ENCODE measurements at regions of chr17 and their contacts with region 1.

Region 1: DNA sequence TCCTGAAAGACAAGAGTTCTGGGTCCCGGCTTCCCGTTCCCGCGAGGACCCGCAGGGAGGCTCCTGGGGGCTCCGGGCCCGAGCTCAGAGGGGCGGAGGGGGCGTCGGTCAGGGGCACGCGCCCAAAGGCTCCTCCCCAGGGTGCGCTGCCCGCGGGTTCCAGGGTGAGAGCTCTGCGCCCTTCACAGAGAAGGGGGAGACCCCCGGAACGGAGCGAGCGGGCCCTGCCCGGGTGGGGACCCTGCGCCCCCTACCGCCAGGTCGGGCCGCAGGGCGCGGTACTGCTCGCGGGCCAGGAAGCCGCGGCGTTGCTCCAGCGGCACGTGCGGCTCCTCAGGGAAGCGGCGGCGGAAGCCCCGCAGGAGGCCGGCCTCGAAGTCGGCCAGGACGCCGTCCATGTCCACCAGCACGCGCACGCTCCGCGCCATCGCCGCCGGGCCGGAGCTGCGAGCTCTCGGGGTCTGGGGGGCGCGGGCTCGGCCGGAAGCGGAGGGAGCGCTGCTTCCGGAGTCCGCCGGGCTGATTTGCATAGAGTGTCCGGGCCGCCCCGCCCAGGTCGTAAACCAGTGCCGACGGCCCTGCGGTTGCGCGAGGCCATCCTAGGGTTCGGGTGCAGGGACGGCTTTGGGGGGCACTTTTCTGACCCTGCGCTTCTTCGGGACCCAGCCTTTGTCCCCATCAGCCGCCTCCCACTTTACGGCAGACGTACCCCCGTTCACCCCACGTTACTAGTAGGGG is at the start of gene NT5C:
- DNase-seq: peak; percentile 86
- ATAC-seq: peak; percentile 87
- H3K4me3 Mint-ChIP-seq: peak within 1 kb of the TSS; percentile 81
- H3K27ac Mint-ChIP-seq: peak within 1 kb of the TSS; percentile 89
- H3K4me1 Mint-ChIP-seq: peaks cover 28% of the 10 kb centered on the region
- H3K27me3 Mint-ChIP-seq: no peaks in the 10 kb centered on the region
- total RNA-seq, gene NT5C: 65.2 to 73.1 TPM

Region 2: DNA sequence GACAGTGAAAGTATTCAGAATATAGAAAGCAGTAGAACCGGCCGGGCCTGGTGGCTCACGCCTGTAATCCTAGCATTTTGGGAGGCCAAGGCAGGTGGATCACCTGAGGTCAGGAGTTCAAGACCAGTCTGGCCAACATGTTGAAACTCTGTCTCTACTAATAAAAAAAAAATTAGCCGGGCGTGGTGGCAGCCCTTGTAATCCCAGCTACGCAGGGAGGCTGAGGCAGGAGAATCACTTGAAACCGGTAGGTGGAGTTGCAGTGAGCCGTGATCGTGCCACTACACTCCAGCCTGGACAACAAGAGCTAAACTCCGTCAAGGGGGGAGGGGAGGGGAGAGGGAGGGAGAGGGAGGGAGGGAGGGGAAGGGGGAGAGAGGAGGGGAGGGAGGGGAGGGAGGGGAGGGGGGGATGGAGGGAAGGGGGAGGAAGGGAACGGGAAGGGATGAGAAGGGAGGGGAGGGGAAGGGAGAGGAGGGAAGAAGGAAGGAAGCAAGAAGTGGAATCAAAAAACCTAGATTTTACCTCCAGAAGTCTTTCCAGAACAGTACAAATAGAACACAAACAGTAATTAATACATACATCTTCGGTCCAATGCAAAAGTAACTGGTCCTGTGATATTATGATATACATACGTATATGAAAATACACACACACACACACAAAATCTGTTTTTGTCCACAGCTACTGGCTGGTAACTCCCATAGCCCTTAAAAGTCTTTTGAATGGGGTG is 11.0 kb after region 1 on chr17:
- CTCF ChIA-PET with region 1: interaction called, 15 read pairs
- DNase-seq: no peak
- ATAC-seq: no peak
- H3K4me3 Mint-ChIP-seq: no peak overlapping the region
- H3K27ac Mint-ChIP-seq: no peak overlapping the region
- H3K4me1 Mint-ChIP-seq: peaks cover 27% of the 10 kb centered on the region
- H3K27me3 Mint-ChIP-seq: no peaks in the 10 kb centered on the region

Region 3: DNA sequence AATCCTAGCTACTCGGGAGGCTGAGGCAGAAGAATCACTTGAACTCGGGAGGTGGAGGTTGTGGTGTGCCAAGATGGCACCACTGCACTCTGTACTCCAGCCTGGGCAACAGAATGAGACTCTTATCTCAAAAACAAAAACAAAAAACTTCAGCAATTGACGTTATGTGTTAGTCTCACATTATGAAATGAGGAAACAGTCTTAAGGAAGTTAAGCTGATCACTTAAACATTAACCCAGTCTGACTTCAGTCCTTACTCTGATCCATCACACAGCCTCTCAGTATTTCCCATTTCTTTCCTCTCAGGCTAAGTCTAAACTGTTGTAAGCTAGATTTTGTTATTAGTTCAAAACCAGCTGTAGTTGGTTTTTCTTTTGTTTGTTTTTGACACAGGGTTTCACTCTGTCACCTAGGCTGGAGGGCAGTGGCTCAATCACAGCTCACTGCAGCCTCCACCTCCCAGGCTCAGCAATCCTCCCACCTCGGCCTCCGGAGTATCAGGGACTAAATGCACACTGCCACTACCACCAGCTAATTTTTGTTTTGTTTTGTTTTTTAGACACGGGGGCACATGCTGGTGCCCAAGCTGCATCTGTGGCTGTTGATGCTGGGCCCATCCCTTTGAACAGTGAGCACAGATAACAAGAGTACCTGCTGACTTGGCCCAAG is 16.6 kb after region 1 on chr17:
- CTCF ChIA-PET with region 1: interaction called, 15 read pairs
- DNase-seq: no peak
- ATAC-seq: no peak
- H3K4me3 Mint-ChIP-seq: no peak overlapping the region
- H3K27ac Mint-ChIP-seq: peak overlapping the region; percentile 48
- H3K4me1 Mint-ChIP-seq: peaks cover 39% of the 10 kb centered on the region
- H3K27me3 Mint-ChIP-seq: no peaks in the 10 kb centered on the region